ENCODE measurements at regions of chr6 and their contacts with region 1.

Region 1: GRCh38 chr6:156231026-156231765 is 546.0 kb upstream of the ARID1B start:
- DNase-seq: no peak
- H3K4me3 ChIP-seq: no peak overlapping the region
- H3K27ac ChIP-seq: no peak overlapping the region
- H3K4me1 ChIP-seq: peaks cover 4% of the 10 kb centered on the region
- H3K27me3 ChIP-seq: no peaks in the 10 kb centered on the region
- CTCF ChIP-seq: no peak

Region 2: GRCh38 chr6:155314092-155314772 is 917.0 kb before region 1 on chr6 and contains the start of gene TFB1M:
- CTCF ChIA-PET with region 1: no interaction called
- POLR2A ChIA-PET with region 1: interaction called, 11 read pairs
- intact Hi-C with region 1: no loop called
- DNase-seq: peak; percentile 100
- H3K4me3 ChIP-seq: peak within 1 kb of the TSS; percentile 86
- H3K27ac ChIP-seq: peak within 1 kb of the TSS; percentile 77
- H3K4me1 ChIP-seq: peaks cover 29% of the 10 kb centered on the region
- H3K27me3 ChIP-seq: no peaks in the 10 kb centered on the region
- CTCF ChIP-seq: no peak
- total RNA-seq, gene TFB1M: 40.3 and 47.6 TPM in 2 replicates

Region 3: GRCh38 chr6:156199182-156199581 is 32.0 kb before region 1 on chr6:
- CTCF ChIA-PET with region 1: no interaction called
- POLR2A ChIA-PET with region 1: no interaction called
- intact Hi-C with region 1: no loop called
- DNase-seq: no peak
- H3K4me3 ChIP-seq: no peak overlapping the region
- H3K27ac ChIP-seq: no peak overlapping the region
- H3K4me1 ChIP-seq: no peaks in the 10 kb centered on the region
- H3K27me3 ChIP-seq: no peaks in the 10 kb centered on the region
- CTCF ChIP-seq: no peak